ENCODE measurements at regions of chr4 and their contacts with region 1.

Region 1: DNA sequence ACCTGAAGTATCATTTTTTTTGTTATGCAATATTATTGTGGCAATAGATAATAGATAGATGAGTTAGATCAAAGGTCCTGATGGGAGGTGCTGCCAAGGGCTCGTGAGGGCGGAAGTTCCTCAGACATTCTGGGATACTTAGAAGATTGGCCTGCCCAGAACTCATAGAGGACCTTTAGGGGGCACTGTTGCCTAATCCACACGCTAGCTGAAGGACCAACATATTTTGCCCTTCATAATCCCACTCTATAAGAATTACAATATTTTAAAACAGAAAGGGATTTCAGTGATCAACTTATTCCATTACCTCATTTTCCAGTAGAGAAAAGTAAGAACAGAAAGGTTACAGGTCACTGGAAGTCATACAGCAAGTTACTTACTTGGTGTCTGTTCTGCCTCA is 22.9 kb upstream of the COX7B2 start:
- DNase-seq: no peak
- H3K4me3 Mint-ChIP-seq: no peak overlapping the region
- H3K27ac Mint-ChIP-seq: no peak overlapping the region
- H3K4me1 Mint-ChIP-seq: no peaks in the 10 kb centered on the region
- H3K27me3 Mint-ChIP-seq: peaks cover 10% of the 10 kb centered on the region

Region 2: GRCh38 chr4:46886711-46887110 is 45.3 kb before region 1 on chr4:
- intact Hi-C with region 1: no loop called
- DNase-seq: no peak
- H3K4me3 Mint-ChIP-seq: no peak overlapping the region
- H3K27ac Mint-ChIP-seq: no peak overlapping the region
- H3K4me1 Mint-ChIP-seq: no peaks in the 10 kb centered on the region
- H3K27me3 Mint-ChIP-seq: peaks cover 2% of the 10 kb centered on the region

Region 3: DNA sequence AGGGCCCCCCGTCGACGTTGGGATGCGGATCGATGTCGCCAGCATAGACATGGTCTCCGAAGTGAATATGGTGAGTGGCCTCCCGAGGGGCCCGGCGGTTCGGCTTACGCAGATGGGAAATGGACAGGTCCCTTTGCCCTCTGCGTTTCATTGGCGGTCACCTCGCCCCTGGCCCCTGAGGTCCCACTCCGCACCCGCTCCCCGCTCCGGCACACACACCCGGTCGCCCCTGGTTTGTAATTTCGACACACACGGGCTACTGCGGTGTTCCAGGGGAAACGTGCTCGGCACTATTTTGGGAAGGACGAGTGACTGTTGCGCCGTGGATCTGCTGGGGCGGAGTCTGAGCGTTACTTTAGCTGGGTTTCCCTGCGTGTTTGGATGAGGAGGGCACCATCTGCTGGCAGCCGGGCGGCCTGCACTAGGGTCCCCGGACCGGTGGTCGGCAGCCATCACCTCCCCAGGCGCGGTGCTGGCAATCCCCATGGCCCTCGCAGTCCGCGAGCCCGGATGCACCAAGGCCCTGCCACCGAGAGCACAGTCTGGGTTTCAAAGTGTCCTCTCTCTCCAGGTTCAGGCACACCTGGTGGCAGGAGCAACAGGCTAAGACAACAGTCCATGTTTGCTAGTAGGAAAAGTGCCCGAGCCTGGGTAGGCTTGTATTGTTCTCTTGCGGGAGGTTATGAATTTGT is 100.6 kb after region 1 on chr4:
- intact Hi-C with region 1: loop called (anchors 1 kb)
- DNase-seq: peak; percentile 11
- H3K4me3 Mint-ChIP-seq: peak overlapping the region; percentile 74
- H3K27ac Mint-ChIP-seq: no peak overlapping the region
- H3K4me1 Mint-ChIP-seq: peaks cover 20% of the 10 kb centered on the region
- H3K27me3 Mint-ChIP-seq: peaks cover 48% of the 10 kb centered on the region

Region 4: GRCh38 chr4:47383829-47384427 is 451.9 kb after region 1 on chr4:
- intact Hi-C with region 1: loop called (anchors 5 kb)
- DNase-seq: no peak
- H3K4me3 Mint-ChIP-seq: no peak overlapping the region
- H3K27ac Mint-ChIP-seq: no peak overlapping the region
- H3K4me1 Mint-ChIP-seq: no peaks in the 10 kb centered on the region
- H3K27me3 Mint-ChIP-seq: peaks cover 2% of the 10 kb centered on the region